Heart right ventricle (tissue), 16 donors: ENCODE measurements at regions of chr18 and their contacts with region 1.

Region 1: DNA sequence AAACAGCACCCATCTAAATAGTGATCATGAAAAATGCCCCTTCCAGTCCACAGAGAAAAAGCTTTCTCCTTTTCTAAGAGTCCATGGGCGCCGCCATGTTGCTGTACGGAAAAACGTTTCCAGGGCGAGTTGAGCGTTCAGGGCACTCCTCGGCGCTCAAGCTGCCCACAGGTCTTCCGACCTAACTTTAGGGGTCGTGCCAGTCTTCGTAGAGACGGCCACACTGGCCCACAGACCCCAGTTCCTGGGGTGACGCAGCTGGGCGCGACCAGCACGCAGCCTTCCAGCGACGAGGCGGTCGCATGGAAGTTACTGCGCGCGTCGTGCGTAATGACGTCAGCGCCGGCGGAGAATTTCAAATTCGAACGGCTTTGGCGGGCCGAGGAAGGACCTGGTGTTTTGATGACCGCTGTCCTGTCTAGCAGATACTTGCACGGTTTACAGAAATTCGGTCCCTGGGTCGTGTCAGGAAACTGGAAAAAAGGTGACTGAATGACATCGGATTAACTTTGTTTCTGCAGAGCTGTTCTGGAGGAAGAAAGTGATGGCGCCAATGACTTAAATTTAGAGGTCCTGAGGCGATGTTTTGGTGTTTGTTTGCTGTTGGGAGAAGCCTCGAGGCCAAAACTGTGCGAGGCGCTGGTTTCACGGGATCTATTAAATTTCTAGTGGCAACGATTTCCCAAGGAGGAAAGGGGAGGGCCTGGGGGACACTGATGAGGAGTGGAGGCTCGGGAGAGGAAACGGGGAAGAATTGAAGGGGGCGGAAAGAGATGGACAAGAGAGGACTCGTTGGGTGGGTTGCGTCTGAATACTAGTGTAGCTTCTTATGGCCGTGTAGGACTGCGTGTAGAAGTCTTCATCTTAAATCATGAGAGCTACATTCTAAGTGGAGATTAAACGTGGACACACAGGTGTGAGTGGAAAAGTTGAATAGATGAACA is at the starts of genes METTL4 and NDC80:
- DNase-seq: peak; percentile 85 to 86
- ATAC-seq: peak; percentile 94 to 98 (median 96)
- H3K4me3 ChIP-seq: peak within 1 kb of the TSS; percentile 47 to 88 (median 69)
- H3K27ac ChIP-seq: peak within 1 kb of the TSS; percentile 92 to 99 (median 98)
- H3K4me1 ChIP-seq: peaks cover 0 to 46% (median 18%) of the 10 kb centered on the region in 9 donors
- H3K27me3 ChIP-seq: no peaks in the 10 kb centered on the region
- CTCF ChIP-seq: peak in 2 of 9 donors; percentile 2
- total RNA-seq, gene METTL4: 3.9 to 9.9 (median 5.4) TPM
- total RNA-seq, gene NDC80: 0.17 to 2.7 (median 0.34) TPM in 8 of 10 donors, not detected in the others

Region 2: DNA sequence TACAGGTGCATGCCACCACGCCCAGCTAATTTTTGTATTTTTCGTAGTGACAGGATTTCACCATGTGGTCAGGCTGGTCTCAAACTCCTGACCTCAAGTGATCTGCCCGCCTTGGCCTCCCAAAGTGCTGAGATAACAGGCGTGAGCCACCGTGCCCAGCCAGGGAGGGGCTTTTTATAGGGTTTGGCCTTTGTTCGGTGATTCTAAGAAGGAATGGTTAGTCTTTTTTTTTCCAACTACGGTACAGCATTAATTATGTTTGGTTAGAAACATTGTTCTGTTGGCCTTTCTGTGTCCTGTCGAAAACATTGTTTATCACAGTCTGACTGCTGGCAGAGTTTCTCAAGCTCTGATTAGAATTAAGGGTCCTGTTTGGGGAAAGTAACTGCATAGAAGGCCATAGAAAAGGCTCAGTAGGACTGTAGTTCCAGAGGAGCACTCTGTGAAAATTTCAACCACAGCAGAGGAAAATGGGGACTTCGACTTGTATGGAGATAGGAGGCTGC is 64.7 kb after region 1 on chr18:
- intact Hi-C with region 1: loop called in 2 of 10 experiments (anchors 5 kb)
- DNase-seq: no peak
- ATAC-seq: peak in 6 of 8 donors; percentile 11 to 51 (median 32)
- H3K4me3 ChIP-seq: peak overlapping the region in 6 of 10 donors; percentile 5 to 36 (median 16)
- H3K27ac ChIP-seq: peak overlapping the region; percentile 79 to 91 (median 85)
- H3K4me1 ChIP-seq: peaks cover 0 to 48% (median 19%) of the 10 kb centered on the region in 9 donors
- H3K27me3 ChIP-seq: no peaks in the 10 kb centered on the region
- CTCF ChIP-seq: no peak

Region 3: DNA sequence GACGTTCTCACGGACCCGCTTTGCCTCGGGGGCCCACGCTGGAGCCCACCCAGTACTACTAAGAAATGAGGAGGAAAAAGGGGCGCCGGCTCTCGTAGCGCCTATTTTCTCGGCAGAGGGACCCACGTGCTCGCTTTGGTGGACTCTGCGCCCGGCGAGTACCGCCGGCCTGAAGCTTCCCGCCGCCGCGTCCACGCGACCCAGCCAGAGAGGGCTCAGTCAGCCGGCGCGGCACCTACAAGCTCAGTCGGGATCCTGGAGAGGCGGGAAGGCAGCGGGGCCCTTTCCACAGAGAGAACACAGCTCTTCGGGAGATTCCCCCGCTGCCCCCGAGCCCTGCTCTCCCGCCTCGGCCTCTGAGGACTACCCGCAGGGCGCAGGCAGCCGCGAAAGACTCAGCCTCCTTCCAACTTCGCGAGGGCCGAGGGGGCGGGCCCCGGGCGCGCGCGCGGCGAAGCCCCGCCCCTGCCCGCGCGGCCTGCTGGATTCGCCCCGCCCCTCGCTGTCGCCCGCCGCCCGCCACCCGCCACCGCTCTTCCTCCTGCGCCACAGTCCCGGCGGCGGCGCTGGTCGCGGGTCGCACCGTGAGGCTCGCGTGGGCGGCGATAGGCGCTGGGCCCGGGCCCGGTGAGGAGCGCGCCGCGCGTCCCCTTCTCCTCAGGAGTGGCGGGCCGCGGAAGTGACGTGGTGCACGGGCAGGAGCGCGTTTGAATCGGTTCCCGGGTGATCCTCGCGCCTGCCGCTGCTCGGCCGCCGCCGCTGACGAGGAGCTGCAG is 83.9 kb after region 1 on chr18 and contains the start of gene SMCHD1:
- intact Hi-C with region 1: loop called in 9 of 10 experiments (anchors 2 to 10 kb)
- DNase-seq: peak; percentile 86 to 90
- ATAC-seq: peak; percentile 89 to 94 (median 91)
- H3K4me3 ChIP-seq: peak within 1 kb of the TSS; percentile 65 to 94 (median 88)
- H3K27ac ChIP-seq: peak within 1 kb of the TSS; percentile 86 to 99 (median 96)
- H3K4me1 ChIP-seq: peaks cover 0 to 48% (median 36%) of the 10 kb centered on the region in 9 donors
- H3K27me3 ChIP-seq: no peaks in the 10 kb centered on the region
- CTCF ChIP-seq: no peak
- total RNA-seq, gene SMCHD1: 20.4 to 35.3 (median 33.4) TPM